ENCODE measurements at regions of chr20 and their contacts with region 1.

Region 1: GRCh38 chr20:35994994-35995453 is 26.6 kb downstream of the CNBD2 start:
- DNase-seq: peak; percentile 85
- ATAC-seq: peak; percentile 85
- H3K4me3 ChIP-seq: no peak overlapping the region
- H3K4me3 Mint-ChIP-seq: no peak overlapping the region
- H3K27ac ChIP-seq: no peak overlapping the region
- H3K27ac Mint-ChIP-seq: peak overlapping the region; percentile 69
- H3K4me1 ChIP-seq: peaks cover 4% of the 10 kb centered on the region in 2 donors
- H3K4me1 Mint-ChIP-seq: peaks cover 9% of the 10 kb centered on the region
- H3K27me3 ChIP-seq: peaks cover 0 to 5% (median 1%) of the 10 kb centered on the region in 4 experiments
- H3K27me3 Mint-ChIP-seq: peaks cover 6% of the 10 kb centered on the region
- CTCF ChIP-seq: peak; percentile 89

Region 2: DNA sequence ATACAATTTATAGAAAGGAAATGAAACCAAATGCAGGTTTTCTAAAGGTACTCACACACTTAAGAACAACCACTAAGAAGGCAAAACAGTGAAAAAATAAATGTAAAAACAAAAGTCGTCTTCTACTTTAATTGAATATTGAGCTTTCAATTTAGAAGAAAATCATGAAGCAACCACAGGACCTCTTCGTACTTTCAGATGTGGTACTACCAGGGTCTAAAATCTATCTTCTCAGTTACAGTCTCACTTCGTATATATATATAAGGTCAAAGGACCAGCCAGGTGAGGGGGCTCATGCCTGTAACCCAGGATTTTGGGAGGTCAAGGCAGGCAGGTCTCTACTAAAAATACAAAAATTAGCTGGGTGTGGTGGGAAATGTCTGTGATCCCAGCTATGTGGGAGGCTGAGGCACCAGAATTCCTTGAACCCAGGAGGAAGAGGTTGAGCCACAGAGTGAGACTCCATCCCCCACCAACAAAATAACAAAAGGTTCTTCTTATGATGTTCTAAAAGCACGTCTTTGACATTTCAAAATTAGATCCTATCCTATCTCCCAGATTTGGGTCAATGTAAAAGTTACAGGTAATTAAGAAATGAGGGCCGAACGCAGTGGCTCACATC is 283.3 kb before region 1 on chr20:
- CTCF ChIA-PET with region 1: no interaction called
- POLR2A ChIA-PET with region 1: no interaction called
- intact Hi-C with region 1: no loop called
- DNase-seq: no peak
- ATAC-seq: no peak
- H3K4me3 ChIP-seq: no peak overlapping the region
- H3K4me3 Mint-ChIP-seq: no peak overlapping the region
- H3K27ac ChIP-seq: no peak overlapping the region
- H3K27ac Mint-ChIP-seq: no peak overlapping the region
- H3K4me1 ChIP-seq: peaks cover 0 to 5% of the 10 kb centered on the region in 2 donors
- H3K4me1 Mint-ChIP-seq: peaks cover 33% of the 10 kb centered on the region
- H3K27me3 ChIP-seq: no peaks in the 10 kb centered on the region
- H3K27me3 Mint-ChIP-seq: no peaks in the 10 kb centered on the region
- CTCF ChIP-seq: no peak

Region 3: GRCh38 chr20:35883778-35884540 is 111.1 kb before region 1 on chr20:
- CTCF ChIA-PET with region 1: no interaction called
- POLR2A ChIA-PET with region 1: no interaction called
- intact Hi-C with region 1: no loop called
- DNase-seq: peak; percentile 68
- ATAC-seq: peak; percentile 84
- H3K4me3 ChIP-seq: no peak overlapping the region
- H3K4me3 Mint-ChIP-seq: no peak overlapping the region
- H3K27ac ChIP-seq: peak overlapping the region in 1 of 2 donors; percentile 16
- H3K27ac Mint-ChIP-seq: peak overlapping the region; percentile 22
- H3K4me1 ChIP-seq: no peaks in the 10 kb centered on the region
- H3K4me1 Mint-ChIP-seq: peaks cover 7% of the 10 kb centered on the region
- H3K27me3 ChIP-seq: no peaks in the 10 kb centered on the region
- H3K27me3 Mint-ChIP-seq: no peaks in the 10 kb centered on the region
- CTCF ChIP-seq: peak; percentile 72

Region 4: DNA sequence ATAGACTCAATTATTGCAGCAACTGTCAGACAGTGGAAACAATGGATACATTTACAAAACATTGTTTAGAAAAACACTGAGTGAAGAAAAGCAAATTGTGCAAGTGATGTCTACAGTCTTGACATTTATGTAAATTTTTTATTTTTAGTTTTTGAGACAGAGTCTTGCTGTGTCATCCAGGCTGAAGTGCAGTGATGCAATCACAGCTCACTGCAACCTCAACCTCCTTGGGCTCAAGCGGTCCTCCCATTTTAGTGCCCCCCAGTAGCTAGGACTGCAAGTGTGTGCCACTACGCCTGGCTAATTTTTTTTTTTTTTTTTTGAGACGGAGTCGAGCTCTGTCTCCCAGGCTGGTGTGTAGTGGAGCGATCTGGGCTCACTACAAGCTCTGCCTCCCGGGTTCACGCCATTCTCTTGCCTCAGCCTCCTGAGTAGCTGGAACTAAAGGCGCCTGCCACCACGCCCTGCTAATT is 16.9 kb before region 1 on chr20:
- CTCF ChIA-PET with region 1: interaction called, 75 read pairs
- POLR2A ChIA-PET with region 1: no interaction called
- intact Hi-C with region 1: no loop called
- DNase-seq: no peak
- ATAC-seq: no peak
- H3K4me3 ChIP-seq: no peak overlapping the region
- H3K4me3 Mint-ChIP-seq: no peak overlapping the region
- H3K27ac ChIP-seq: no peak overlapping the region
- H3K27ac Mint-ChIP-seq: no peak overlapping the region
- H3K4me1 ChIP-seq: no peaks in the 10 kb centered on the region
- H3K4me1 Mint-ChIP-seq: no peaks in the 10 kb centered on the region
- H3K27me3 ChIP-seq: no peaks in the 10 kb centered on the region
- H3K27me3 Mint-ChIP-seq: no peaks in the 10 kb centered on the region
- CTCF ChIP-seq: no peak

Region 5: DNA sequence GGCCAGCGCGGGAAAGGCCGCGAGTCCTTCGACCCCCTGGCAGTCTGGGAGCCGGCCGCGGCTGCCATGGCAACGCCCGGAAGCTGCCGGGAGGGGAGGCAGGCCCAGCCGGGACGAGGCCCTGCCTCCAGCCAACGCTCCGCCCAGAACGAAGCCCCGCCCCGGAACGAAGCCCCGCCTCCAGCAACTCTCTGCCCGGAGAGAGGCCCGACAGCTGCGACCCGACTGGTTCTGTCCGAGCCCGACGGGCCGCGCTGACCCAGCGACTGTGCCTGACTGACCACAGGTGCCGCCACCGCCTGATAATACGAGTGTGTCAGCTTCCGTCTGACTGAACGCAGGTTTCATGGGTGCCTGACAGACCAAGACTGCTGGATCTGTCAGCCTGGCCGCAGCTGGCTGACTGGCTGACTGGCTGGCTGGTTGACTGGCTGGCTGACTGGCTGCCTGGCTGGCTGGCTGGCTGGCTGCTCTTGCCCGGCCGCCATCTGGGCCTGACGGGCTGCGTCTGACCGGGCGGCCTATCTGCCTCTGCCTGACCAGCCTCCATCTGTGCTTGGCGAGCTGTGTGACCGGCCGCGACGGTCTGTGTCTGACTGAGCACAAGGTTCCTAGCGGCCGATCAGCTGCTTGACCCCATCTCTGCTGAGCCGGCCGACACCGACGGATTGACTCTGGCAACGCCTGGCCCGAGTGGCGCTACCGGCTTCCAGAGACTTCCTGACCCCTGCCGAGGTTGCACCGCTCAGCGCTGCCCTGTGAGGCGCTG is 69.8 kb after region 1 on chr20:
- CTCF ChIA-PET with region 1: interaction called, 13 read pairs
- POLR2A ChIA-PET with region 1: interaction called, 3 read pairs
- intact Hi-C with region 1: loop called (anchors 10 kb)
- DNase-seq: peak; percentile 95
- ATAC-seq: peak; percentile 97
- H3K4me3 ChIP-seq: peak overlapping the region; percentile 52 to 77 (median 72)
- H3K4me3 Mint-ChIP-seq: peak overlapping the region; percentile 94
- H3K27ac ChIP-seq: peak overlapping the region; percentile 24 to 83
- H3K27ac Mint-ChIP-seq: peak overlapping the region; percentile 89
- H3K4me1 ChIP-seq: peaks cover 11 to 17% of the 10 kb centered on the region in 2 donors
- H3K4me1 Mint-ChIP-seq: peaks cover 6% of the 10 kb centered on the region
- H3K27me3 ChIP-seq: peaks cover 0 to 7% (median 1%) of the 10 kb centered on the region in 4 experiments
- H3K27me3 Mint-ChIP-seq: peaks cover 4% of the 10 kb centered on the region
- CTCF ChIP-seq: no peak

Region 6: DNA sequence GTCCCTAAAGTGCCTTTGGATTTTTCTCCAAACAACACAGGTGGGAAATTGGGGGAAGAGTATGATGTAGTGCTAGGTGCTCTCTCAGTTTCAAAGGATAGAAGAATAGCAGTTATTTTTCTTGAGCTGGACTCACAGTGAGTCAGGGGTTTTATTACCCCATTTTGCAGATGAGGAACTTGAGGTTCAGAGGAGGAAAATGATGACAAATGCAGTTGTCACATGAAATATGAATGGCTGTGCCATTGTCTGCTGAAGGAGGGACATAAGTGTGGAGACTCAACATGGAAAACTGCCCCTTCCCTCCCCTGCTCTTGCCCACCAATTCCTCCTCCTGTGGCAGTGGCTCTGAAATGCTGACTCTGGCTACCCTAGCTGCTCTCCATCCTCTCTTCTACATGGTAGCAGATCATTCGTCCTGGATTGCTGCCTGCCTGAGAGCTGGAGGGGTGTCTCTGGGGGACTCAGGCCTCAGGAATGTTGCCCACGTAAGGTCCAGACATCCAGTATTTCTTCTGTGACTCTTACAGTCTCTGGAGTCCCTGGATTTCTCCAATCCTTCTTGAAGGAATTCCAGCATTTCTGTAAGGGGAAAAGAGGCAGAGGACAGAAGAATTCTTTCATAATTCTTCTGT is 121.9 kb after region 1 on chr20:
- CTCF ChIA-PET with region 1: interaction called, 33 read pairs
- POLR2A ChIA-PET with region 1: no interaction called
- intact Hi-C with region 1: no loop called
- DNase-seq: no peak
- ATAC-seq: no peak
- H3K4me3 ChIP-seq: no peak overlapping the region
- H3K4me3 Mint-ChIP-seq: no peak overlapping the region
- H3K27ac ChIP-seq: no peak overlapping the region
- H3K27ac Mint-ChIP-seq: no peak overlapping the region
- H3K4me1 ChIP-seq: peaks cover 9 to 15% of the 10 kb centered on the region in 2 donors
- H3K4me1 Mint-ChIP-seq: peaks cover 19% of the 10 kb centered on the region
- H3K27me3 ChIP-seq: no peaks in the 10 kb centered on the region
- H3K27me3 Mint-ChIP-seq: peaks cover 13% of the 10 kb centered on the region
- CTCF ChIP-seq: no peak

Region 7: DNA sequence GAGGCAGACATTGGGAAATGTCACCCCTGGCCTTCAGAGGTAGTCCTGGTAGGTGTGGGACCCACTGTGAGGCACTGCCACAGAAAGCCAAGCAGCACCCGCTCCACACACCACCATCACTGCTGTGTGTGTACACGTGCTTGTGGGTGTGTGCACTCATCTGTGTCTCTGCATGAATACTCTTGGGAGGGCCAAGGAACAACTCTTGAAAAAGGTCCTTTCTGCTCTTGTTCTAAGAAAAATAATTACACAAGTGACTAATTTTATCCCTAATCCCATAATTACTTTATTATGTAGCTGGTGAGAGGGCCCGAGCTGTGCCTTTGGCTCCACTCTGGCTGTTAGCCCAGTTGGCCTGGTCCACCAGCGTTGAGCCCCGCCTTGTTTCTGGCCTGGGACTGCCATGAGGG is 137.8 kb after region 1 on chr20:
- CTCF ChIA-PET with region 1: interaction called, 848 read pairs
- POLR2A ChIA-PET with region 1: interaction called, 9 read pairs
- intact Hi-C with region 1: loop called (anchors 1 kb)
- DNase-seq: peak; percentile 42
- ATAC-seq: peak; percentile 94
- H3K4me3 ChIP-seq: no peak overlapping the region
- H3K4me3 Mint-ChIP-seq: no peak overlapping the region
- H3K27ac ChIP-seq: no peak overlapping the region
- H3K27ac Mint-ChIP-seq: no peak overlapping the region
- H3K4me1 ChIP-seq: peaks cover 9 to 12% of the 10 kb centered on the region in 2 donors
- H3K4me1 Mint-ChIP-seq: peaks cover 14% of the 10 kb centered on the region
- H3K27me3 ChIP-seq: no peaks in the 10 kb centered on the region
- H3K27me3 Mint-ChIP-seq: peaks cover 6% of the 10 kb centered on the region
- CTCF ChIP-seq: no peak

Region 8: GRCh38 chr20:36199345-36200257 is 204.6 kb after region 1 on chr20:
- CTCF ChIA-PET with region 1: interaction called, 36 read pairs
- POLR2A ChIA-PET with region 1: no interaction called
- intact Hi-C with region 1: loop called (anchors 1 kb)
- DNase-seq: peak; percentile 80
- ATAC-seq: peak; percentile 81
- H3K4me3 ChIP-seq: no peak overlapping the region
- H3K4me3 Mint-ChIP-seq: no peak overlapping the region
- H3K27ac ChIP-seq: no peak overlapping the region
- H3K27ac Mint-ChIP-seq: no peak overlapping the region
- H3K4me1 ChIP-seq: peaks cover 3 to 7% of the 10 kb centered on the region in 2 donors
- H3K4me1 Mint-ChIP-seq: peaks cover 7% of the 10 kb centered on the region
- H3K27me3 ChIP-seq: peaks cover 0 to 5% (median 2%) of the 10 kb centered on the region in 4 experiments
- H3K27me3 Mint-ChIP-seq: peaks cover 26% of the 10 kb centered on the region
- CTCF ChIP-seq: peak; percentile 94

Measured in B cell (primary cell).